Activated CD4-positive, alpha-beta T cell treated with anti-CD3 and anti-CD28 coated beads, Interleukin-2, amount 10 ng/mL, durations not matched to agents 24 days and 14 days (primary cell): ENCODE measurements at regions of chr1 and their contacts with region 1.

Region 1: GRCh38 chr1:98053471-98054366 is 132.9 kb upstream of the DPYD start:
- DNase-seq: peak; percentile 89
- H3K4me3 Mint-ChIP-seq: peak overlapping the region; percentile 68
- H3K27ac Mint-ChIP-seq: no peak overlapping the region
- H3K4me1 Mint-ChIP-seq: peaks cover 19% of the 10 kb centered on the region
- H3K27me3 Mint-ChIP-seq: peaks cover 87% of the 10 kb centered on the region

Region 2: GRCh38 chr1:96966536-96967138 is 1087.1 kb before region 1 on chr1:
- intact Hi-C with region 1: loop called (anchors 1 kb)
- DNase-seq: peak; percentile 90
- H3K4me3 Mint-ChIP-seq: no peak overlapping the region
- H3K27ac Mint-ChIP-seq: no peak overlapping the region
- H3K4me1 Mint-ChIP-seq: no peaks in the 10 kb centered on the region
- H3K27me3 Mint-ChIP-seq: peaks cover 3% of the 10 kb centered on the region

Region 3: GRCh38 chr1:97186404-97186803 is 867.3 kb before region 1 on chr1:
- intact Hi-C with region 1: loop called (anchors 5 kb)
- DNase-seq: peak; percentile 58
- H3K4me3 Mint-ChIP-seq: no peak overlapping the region
- H3K27ac Mint-ChIP-seq: no peak overlapping the region
- H3K4me1 Mint-ChIP-seq: no peaks in the 10 kb centered on the region
- H3K27me3 Mint-ChIP-seq: no peaks in the 10 kb centered on the region

Region 4: DNA sequence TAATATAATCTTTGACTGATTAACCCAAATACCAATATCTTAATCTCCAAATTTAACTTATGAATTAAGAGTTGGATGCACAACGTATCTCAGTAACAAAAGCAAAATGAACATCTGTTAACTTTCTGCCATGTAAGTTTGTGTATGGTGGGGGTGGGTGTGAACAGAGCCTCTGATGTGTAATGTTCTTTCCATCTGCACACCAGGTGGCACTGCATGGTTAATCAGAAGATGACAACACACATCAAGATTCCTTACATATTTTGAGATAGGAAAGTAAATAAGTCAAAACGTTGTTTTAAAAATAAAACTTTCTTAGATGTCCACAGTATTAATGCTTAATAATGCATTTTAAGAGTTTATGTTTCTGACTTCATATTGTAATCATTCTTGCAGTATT is 384.8 kb before region 1 on chr1:
- intact Hi-C with region 1: loop called (anchors 1 kb)
- DNase-seq: no peak
- H3K4me3 Mint-ChIP-seq: no peak overlapping the region
- H3K27ac Mint-ChIP-seq: no peak overlapping the region
- H3K4me1 Mint-ChIP-seq: no peaks in the 10 kb centered on the region
- H3K27me3 Mint-ChIP-seq: no peaks in the 10 kb centered on the region

Region 5: DNA sequence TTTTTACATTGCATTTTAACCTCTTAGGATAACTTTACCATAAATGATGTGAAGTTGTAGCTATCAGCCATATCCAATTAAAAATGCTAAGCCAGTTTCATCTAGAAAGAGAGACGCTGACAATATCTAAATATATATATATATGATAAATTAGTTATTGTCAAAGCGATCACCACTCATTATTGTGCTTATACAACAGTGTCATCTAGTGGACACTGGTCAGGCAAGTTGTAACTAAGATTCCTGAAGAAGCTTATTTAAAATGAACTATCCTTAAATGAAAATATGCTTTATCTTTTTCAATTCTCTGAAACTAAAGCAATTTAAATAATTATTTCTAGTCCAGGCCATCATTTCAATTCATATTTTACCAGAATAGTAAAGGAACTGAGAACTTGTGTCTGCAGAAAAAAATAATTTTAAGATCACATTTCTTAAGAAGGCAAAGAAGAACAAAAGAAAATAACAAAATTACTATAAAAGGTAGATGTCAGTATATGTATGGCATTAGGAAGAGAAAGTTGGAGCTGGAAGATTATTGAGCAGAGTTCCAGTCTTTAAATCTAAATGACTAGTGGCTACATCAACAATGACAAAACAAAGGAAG is 414.5 kb after region 1 on chr1:
- intact Hi-C with region 1: loop called (anchors 5 kb)
- DNase-seq: peak; percentile 62
- H3K4me3 Mint-ChIP-seq: no peak overlapping the region
- H3K27ac Mint-ChIP-seq: no peak overlapping the region
- H3K4me1 Mint-ChIP-seq: no peaks in the 10 kb centered on the region
- H3K27me3 Mint-ChIP-seq: peaks cover 8% of the 10 kb centered on the region